ENCODE measurements at regions of chr15 and their contacts with region 1.

Region 1: DNA sequence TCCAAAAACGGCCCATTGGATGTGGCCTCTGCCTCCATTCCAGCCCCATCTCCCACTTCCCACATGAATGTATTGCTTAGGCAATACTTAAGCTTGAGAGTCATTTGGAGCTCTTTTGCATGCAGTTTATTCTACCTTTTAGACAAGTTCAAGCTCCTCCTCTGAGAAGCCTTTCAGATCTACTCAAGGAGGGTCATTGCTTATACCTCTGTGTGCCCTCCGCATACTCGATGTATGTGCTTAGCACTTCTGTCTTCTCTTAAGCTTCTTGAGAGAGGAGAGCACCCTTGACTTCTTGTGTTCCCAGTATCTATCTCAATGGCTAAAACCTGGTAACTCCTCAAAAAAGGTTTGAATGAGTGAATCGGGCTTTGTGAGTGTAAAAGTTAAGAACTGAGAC is 6.6 kb upstream of the UBE3A start:
- DNase-seq: no peak
- H3K4me3 ChIP-seq: no peak overlapping the region
- H3K27ac ChIP-seq: no peak overlapping the region
- H3K4me1 ChIP-seq: no peaks in the 10 kb centered on the region
- H3K27me3 ChIP-seq: no peaks in the 10 kb centered on the region
- CTCF ChIP-seq: no peak
- EP300 ChIP-seq: no peak
- POLR2A ChIP-seq: no peak

Region 2: GRCh38 chr15:25397100-25397499 is 48.3 kb before region 1 on chr15:
- in situ Hi-C with region 1: no loop called
- intact Hi-C with region 1: loop called (anchors 2 kb)
- DNase-seq: no peak
- H3K4me3 ChIP-seq: no peak overlapping the region
- H3K27ac ChIP-seq: no peak overlapping the region
- H3K4me1 ChIP-seq: peaks cover 0 to 9% (median 2%) of the 10 kb centered on the region in 4 donors
- H3K27me3 ChIP-seq: no peaks in the 10 kb centered on the region
- CTCF ChIP-seq: no peak
- EP300 ChIP-seq: no peak
- POLR2A ChIP-seq: no peak

Measured in transverse colon (tissue), 4 donors.